ENCODE measurements at regions of chr13 and their contacts with region 1.

Region 1: GRCh38 chr13:20940083-20940880 is 37.7 kb upstream of the XPO4 start:
- DNase-seq: no peak
- H3K4me3 Mint-ChIP-seq: no peak overlapping the region
- H3K27ac Mint-ChIP-seq: no peak overlapping the region
- H3K4me1 Mint-ChIP-seq: no peaks in the 10 kb centered on the region
- H3K27me3 Mint-ChIP-seq: peaks cover 19% of the 10 kb centered on the region

Region 2: DNA sequence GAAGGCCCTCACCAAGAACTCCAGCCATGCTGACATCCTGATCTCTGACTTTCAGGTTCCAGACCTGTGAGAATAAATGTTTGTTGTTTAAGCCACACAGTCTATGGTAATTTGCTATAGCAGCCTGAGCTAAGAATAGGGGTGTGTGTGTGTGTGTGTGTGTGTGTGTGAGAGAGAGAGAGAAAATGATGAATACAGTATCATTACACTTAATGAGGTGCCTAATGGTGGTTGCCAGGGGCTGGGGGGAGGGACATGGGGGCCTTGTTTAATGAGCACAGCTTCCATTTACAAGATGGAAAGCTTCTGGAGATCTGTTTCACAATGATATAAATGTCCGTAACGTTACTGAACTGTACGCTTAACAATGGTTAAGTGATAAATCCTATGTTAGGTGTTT is 174.9 kb after region 1 on chr13:
- CTCF ChIA-PET with region 1: no interaction called
- POLR2A ChIA-PET with region 1: no interaction called
- intact Hi-C with region 1: loop called (anchors 5 kb)
- DNase-seq: no peak
- H3K4me3 Mint-ChIP-seq: no peak overlapping the region
- H3K27ac Mint-ChIP-seq: no peak overlapping the region
- H3K4me1 Mint-ChIP-seq: no peaks in the 10 kb centered on the region
- H3K27me3 Mint-ChIP-seq: no peaks in the 10 kb centered on the region

Region 3: DNA sequence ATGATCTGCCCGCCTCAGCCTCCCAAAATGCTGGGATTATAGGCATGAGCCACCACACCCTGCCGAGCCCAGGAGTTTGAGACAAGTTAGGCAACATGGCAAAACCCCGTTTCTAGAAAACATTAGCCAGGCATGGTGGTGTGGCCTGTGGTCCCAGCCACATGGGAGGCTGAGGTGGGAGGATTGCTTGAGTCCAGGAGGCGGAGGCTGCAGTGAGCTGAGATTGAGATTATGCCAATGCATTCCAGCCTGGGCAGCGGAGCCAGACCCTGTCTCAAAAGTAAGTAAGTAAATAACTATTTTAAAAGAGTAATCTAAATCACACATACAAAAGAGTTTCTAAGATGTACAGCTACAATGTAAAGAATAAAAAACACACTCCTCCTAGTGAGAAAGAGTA is 194.2 kb after region 1 on chr13:
- CTCF ChIA-PET with region 1: interaction called, 3 read pairs
- POLR2A ChIA-PET with region 1: no interaction called
- intact Hi-C with region 1: loop called (anchors 1 kb)
- DNase-seq: no peak
- H3K4me3 Mint-ChIP-seq: no peak overlapping the region
- H3K27ac Mint-ChIP-seq: no peak overlapping the region
- H3K4me1 Mint-ChIP-seq: peaks cover under 1% of the 10 kb centered on the region
- H3K27me3 Mint-ChIP-seq: peaks cover 12% of the 10 kb centered on the region

Region 4: GRCh38 chr13:21176220-21176982 is 236.1 kb after region 1 on chr13 and contains the starts of genes MRPL57 and SKA3:
- CTCF ChIA-PET with region 1: interaction called, 11 read pairs
- POLR2A ChIA-PET with region 1: no interaction called
- intact Hi-C with region 1: loop called (anchors 1 kb)
- DNase-seq: peak; percentile 96
- H3K4me3 Mint-ChIP-seq: peak within 1 kb of the TSS; percentile 99
- H3K27ac Mint-ChIP-seq: peak within 1 kb of the TSS; percentile 96
- H3K4me1 Mint-ChIP-seq: peaks cover 18% of the 10 kb centered on the region
- H3K27me3 Mint-ChIP-seq: no peaks in the 10 kb centered on the region
- total RNA-seq, gene MRPL57: 20.8 to 23.1 TPM
- total RNA-seq, gene SKA3: 34.0 to 36.2 TPM

Measured in activated CD4-positive, alpha-beta memory T cell treated with anti-CD3 and anti-CD28 coated beads for 36 hours (primary cell).